GM12878 (cell line): ENCODE measurements at regions of chr2 and their contacts with region 1.

Region 1: DNA sequence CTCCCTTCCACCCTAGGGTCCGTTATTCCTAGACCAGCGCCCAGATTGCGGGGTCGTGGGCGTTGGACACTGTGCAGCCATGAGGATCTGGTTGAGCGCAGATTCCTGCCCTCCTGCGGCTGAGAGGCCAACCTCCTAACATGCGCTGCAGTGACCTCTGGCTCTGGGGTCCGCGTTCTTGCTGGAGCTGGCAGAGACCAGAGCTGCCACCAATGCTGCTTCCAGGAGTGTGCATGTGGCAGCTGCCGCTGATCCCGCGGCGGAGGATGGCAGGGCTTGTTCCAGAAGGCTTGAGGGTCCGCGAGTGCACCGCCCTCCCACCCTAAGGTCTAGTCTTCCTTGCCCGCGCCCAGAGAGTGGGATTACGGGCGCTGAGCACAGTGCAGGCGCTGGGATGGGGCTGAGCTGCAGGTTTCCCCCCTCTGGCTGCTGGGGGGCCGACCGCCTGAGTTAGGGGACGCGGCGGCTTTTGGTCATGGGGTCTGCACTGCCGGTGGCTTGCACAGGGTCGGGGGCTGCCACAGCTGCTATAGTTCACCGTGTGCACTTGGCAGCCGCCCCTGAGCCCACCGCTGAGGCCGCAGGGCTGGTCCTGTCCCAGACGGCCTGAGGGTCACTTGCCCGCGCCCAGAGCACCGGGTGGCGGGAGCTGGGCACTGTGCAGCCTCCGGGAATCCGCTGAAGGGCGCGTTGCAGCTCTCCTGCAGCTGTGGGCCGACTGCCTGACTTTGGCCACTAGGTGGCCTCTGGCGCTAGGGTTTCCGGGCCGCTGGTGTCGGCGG is 145.9 kb downstream of the CCDC74A start:
- DNase-seq: no peak
- ATAC-seq: peak; percentile 97
- H3K4me3 ChIP-seq: peak overlapping the region; percentile 42; the same call in 1 of the 2 replicates
- H3K27ac ChIP-seq: no peak overlapping the region
- H3K4me1 ChIP-seq: peaks cover 19% of the 10 kb centered on the region
- H3K27me3 ChIP-seq: no peaks in the 10 kb centered on the region
- CTCF ChIP-seq: peak; percentile 77 to 88 (median 80)
- EP300 ChIP-seq: no peak
- POLR2A ChIP-seq: no peak
- RAD21 ChIP-seq: peak; percentile 77

Region 2: DNA sequence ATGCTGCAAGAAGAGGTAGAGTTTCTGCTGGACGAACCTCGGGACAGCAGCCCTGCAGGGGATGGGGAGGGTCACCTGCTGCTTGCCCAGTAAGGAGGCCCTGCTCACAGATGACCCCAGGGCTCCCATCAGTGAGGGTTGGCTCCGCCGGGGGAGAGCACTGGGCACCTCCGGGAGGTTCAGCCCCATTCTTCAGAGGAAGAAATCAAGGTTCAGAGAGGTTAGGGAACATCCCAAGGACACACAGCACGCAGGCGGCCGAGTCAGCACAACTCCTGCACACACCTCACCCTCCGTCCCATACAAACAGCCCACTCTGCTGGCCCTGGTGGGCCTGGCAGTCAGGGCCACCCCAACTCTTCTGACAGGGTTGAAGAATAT is 1517.0 kb before region 1 on chr2:
- CTCF ChIA-PET with region 1: no interaction called
- POLR2A ChIA-PET with region 1: no interaction called
- RAD21 ChIA-PET with region 1: interaction called, 4 read pairs
- SMC1A ChIA-PET with region 1: no interaction called
- in situ Hi-C with region 1: loop called (anchors 10 kb)
- intact Hi-C with region 1: loop called (anchors 1 kb)
- DNase-seq: no peak
- ATAC-seq: no peak
- H3K4me3 ChIP-seq: no peak overlapping the region
- H3K27ac ChIP-seq: no peak overlapping the region
- H3K4me1 ChIP-seq: peaks cover 18% of the 10 kb centered on the region
- H3K27me3 ChIP-seq: no peaks in the 10 kb centered on the region
- CTCF ChIP-seq: no peak
- EP300 ChIP-seq: no peak
- POLR2A ChIP-seq: no peak
- RAD21 ChIP-seq: no peak

Region 3: DNA sequence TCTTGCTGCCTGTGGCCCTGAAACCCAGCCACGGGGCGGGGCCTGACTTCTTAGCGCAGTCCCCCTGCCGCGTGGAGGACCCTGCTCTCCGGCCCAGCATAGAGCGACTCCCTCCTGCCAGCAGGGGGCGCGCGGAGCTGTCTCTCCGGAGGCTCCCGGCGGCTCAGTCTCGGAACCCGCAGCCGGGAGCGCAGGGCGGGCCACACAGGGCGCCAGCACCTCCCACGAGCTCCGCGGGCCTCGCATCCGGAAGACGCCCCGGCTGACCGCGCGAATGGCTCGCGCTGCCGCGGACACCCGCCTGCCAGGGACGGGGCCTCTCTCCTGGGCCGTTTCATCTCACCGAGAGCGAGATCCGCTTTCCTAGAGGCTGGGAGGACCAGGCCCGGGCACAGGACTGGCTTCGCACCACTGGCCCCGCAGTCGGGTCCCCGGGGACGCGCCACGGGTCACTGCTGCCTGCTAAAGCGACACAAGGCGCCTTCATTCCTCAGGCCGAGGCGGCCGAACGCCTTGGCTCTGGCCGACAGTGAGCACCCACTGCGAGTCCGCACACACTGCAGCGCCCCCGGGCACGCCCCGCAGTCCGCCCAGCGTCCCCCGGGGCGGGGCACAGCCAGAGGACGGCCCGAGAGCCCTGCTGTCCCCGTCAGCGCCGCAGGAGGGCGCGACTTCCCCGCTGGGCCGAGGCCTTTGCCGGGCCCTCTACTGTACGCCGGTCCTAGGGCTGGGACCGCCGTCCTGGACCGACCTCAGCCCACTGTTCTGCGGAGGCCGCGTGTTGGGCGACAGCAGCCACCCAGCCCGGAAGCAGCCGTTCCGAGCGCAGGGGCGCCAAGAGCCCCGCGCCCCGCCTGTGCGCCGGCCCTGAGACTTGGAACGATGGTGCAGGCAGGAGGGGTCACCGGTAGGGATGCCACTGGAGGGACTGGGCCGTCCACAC is 875.8 kb before region 1 on chr2:
- CTCF ChIA-PET with region 1: no interaction called
- POLR2A ChIA-PET with region 1: no interaction called
- RAD21 ChIA-PET with region 1: no interaction called
- SMC1A ChIA-PET with region 1: no interaction called
- in situ Hi-C with region 1: no loop called
- intact Hi-C with region 1: no loop called
- DNase-seq: peak; percentile 19
- ATAC-seq: peak; percentile 94
- H3K4me3 ChIP-seq: peak overlapping the region; percentile 71
- H3K27ac ChIP-seq: peak overlapping the region; percentile 59
- H3K4me1 ChIP-seq: no peaks in the 10 kb centered on the region
- H3K27me3 ChIP-seq: no peaks in the 10 kb centered on the region
- CTCF ChIP-seq: peak; percentile 84 to 97 (median 95); a peak in 5 of 6 replicates
- EP300 ChIP-seq: no peak
- POLR2A ChIP-seq: peak; percentile 65
- RAD21 ChIP-seq: peak; percentile 83

Region 4: DNA sequence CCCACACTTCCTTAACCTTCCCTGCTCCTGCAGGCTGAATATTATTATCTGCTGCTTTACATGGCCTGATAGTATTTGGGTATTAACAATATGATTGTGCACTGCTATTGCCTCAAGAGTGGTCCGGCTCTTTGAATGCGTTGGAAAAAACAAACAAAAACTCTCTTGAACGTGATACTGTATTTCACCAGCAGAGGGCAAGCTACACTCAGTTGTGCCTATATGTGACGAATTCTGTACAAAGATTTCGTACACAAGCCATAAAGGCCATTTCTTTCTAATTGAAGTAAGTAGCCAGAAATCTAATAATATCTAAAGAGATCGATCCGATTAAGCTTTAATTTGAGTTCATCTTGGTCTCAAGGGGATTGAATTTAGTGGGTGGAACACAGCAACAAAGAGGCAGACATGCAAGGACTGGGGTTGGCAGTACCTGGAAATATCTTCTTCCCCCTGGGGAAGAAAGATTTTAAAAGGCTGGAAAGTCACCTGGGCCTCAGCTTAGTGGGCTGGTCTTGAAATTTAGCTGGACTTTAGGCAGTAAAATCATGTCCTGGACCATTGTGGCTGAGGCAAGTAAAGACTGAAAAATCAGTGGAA is 260.3 kb before region 1 on chr2:
- CTCF ChIA-PET with region 1: interaction called, 35 read pairs
- POLR2A ChIA-PET with region 1: no interaction called
- RAD21 ChIA-PET with region 1: interaction called, 39 read pairs
- SMC1A ChIA-PET with region 1: interaction called, 22 read pairs
- in situ Hi-C with region 1: loop called (anchors 5 kb)
- intact Hi-C with region 1: loop called (anchors 1 kb)
- DNase-seq: peak; percentile 15
- ATAC-seq: peak; percentile 81
- H3K4me3 ChIP-seq: no peak overlapping the region
- H3K27ac ChIP-seq: no peak overlapping the region
- H3K4me1 ChIP-seq: no peaks in the 10 kb centered on the region
- H3K27me3 ChIP-seq: peaks cover 1 to 3% of the 10 kb centered on the region in 2 experiments; a peak in 1 of 4 replicates
- CTCF ChIP-seq: peak; percentile 65 to 87 (median 69)
- EP300 ChIP-seq: no peak
- POLR2A ChIP-seq: no peak
- RAD21 ChIP-seq: peak; percentile 91

Region 5: GRCh38 chr2:131580187-131580586 is 93.4 kb before region 1 on chr2:
- CTCF ChIA-PET with region 1: interaction called, 5 read pairs
- POLR2A ChIA-PET with region 1: interaction called, 3 read pairs
- RAD21 ChIA-PET with region 1: no interaction called
- SMC1A ChIA-PET with region 1: no interaction called
- in situ Hi-C with region 1: no loop called
- intact Hi-C with region 1: loop called (anchors 2 kb)
- DNase-seq: no peak
- ATAC-seq: peak; percentile 72
- H3K4me3 ChIP-seq: no peak overlapping the region
- H3K27ac ChIP-seq: peak overlapping the region; percentile 80
- H3K4me1 ChIP-seq: peaks cover 67% of the 10 kb centered on the region
- H3K27me3 ChIP-seq: no peaks in the 10 kb centered on the region
- CTCF ChIP-seq: 0 out of 6 replicates have a peak, but pooled peaks of 1 of the 3 experiments have one; percentile 2
- EP300 ChIP-seq: no peak
- POLR2A ChIP-seq: no peak
- RAD21 ChIP-seq: peak; percentile 21; the same call in 1 of the 2 replicates

Region 6: GRCh38 chr2:131753675-131754561 is 80.3 kb after region 1 on chr2:
- CTCF ChIA-PET with region 1: no interaction called
- POLR2A ChIA-PET with region 1: no interaction called
- RAD21 ChIA-PET with region 1: no interaction called
- SMC1A ChIA-PET with region 1: no interaction called
- in situ Hi-C with region 1: no loop called
- intact Hi-C with region 1: no loop called
- DNase-seq: no peak
- ATAC-seq: no peak
- H3K4me3 ChIP-seq: no peak overlapping the region
- H3K27ac ChIP-seq: no peak overlapping the region
- H3K4me1 ChIP-seq: no peaks in the 10 kb centered on the region
- H3K27me3 ChIP-seq: no peaks in the 10 kb centered on the region
- CTCF ChIP-seq: no peak
- EP300 ChIP-seq: no peak
- POLR2A ChIP-seq: no peak
- RAD21 ChIP-seq: no peak

Region 7: DNA sequence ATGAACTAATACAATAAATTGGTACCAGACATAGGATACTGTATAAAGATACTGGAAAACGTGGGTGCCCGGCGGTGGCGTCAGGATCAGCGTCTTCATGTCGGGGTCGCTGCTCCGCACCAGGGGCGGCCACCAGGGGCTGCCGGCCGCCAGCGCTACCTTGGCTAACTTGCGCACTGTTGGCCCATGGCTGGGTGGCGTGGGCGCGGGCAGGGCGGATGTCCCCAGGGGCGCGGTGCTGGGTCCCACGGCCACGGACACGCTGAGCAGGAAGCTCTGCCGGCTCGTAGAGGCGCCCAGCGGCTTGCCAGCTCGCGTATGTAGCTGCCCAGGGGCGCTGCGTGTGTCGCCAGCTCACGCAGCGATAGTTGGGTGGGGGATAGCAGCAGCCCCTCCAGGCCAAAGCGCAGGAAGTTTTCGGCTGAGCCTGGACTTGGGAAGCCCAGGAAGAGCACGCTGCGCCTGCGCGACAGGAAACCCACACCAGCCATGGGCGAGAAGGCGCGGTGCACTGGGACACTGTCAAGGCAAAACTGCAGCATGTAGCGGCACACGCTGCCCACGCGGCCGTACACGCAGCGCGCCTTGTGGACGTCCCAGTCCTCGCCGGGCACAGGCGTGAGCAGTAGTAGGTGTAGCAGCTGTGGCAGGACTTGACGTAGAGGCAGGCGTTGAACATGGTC is 154.0 kb after region 1 on chr2:
- CTCF ChIA-PET with region 1: no interaction called
- POLR2A ChIA-PET with region 1: no interaction called
- RAD21 ChIA-PET with region 1: no interaction called
- SMC1A ChIA-PET with region 1: no interaction called
- in situ Hi-C with region 1: no loop called
- intact Hi-C with region 1: no loop called
- DNase-seq: no peak
- ATAC-seq: no peak
- H3K4me3 ChIP-seq: no peak overlapping the region
- H3K27ac ChIP-seq: no peak overlapping the region
- H3K4me1 ChIP-seq: no peaks in the 10 kb centered on the region
- H3K27me3 ChIP-seq: no peaks in the 10 kb centered on the region
- CTCF ChIP-seq: no peak
- EP300 ChIP-seq: no peak
- POLR2A ChIP-seq: no peak
- RAD21 ChIP-seq: no peak